CD14-positive monocyte (primary cell): ENCODE measurements at regions of chr3 and their contacts with region 1.

Region 1: GRCh38 chr3:8970971-8971589 is 7.8 kb upstream of the RAD18 start:
- DNase-seq: peak; percentile 48 to 62 (median 50)
- H3K4me3 ChIP-seq: no peak overlapping the region
- H3K4me3 Mint-ChIP-seq: no peak overlapping the region
- H3K27ac ChIP-seq: no peak overlapping the region
- H3K27ac Mint-ChIP-seq: peak overlapping the region in 1 of 7 donors; percentile 66
- H3K4me1 ChIP-seq: no peaks in the 10 kb centered on the region
- H3K4me1 Mint-ChIP-seq: peaks cover 3% of the 10 kb centered on the region
- H3K27me3 ChIP-seq: no peaks in the 10 kb centered on the region
- H3K27me3 Mint-ChIP-seq: peaks cover 7 to 16% (median 10%) of the 10 kb centered on the region in 3 donors
- CTCF ChIP-seq: peak; percentile 94

Region 2: GRCh38 chr3:9036404-9037131 is 65.5 kb after region 1 on chr3:
- intact Hi-C with region 1: no loop called
- DNase-seq: no peak
- H3K4me3 ChIP-seq: no peak overlapping the region
- H3K4me3 Mint-ChIP-seq: no peak overlapping the region
- H3K27ac ChIP-seq: no peak overlapping the region
- H3K27ac Mint-ChIP-seq: peak overlapping the region in 3 of 7 donors; percentile 13 to 49 (median 21)
- H3K4me1 ChIP-seq: peaks cover 28 to 29% of the 10 kb centered on the region in 2 donors
- H3K4me1 Mint-ChIP-seq: peaks cover 29% of the 10 kb centered on the region
- H3K27me3 ChIP-seq: no peaks in the 10 kb centered on the region
- H3K27me3 Mint-ChIP-seq: peaks cover 0 to 2% (median 1%) of the 10 kb centered on the region in 3 donors
- CTCF ChIP-seq: no peak

Region 3: GRCh38 chr3:9067352-9067975 is 96.4 kb after region 1 on chr3:
- intact Hi-C with region 1: loop called in 1 of 2 experiments (anchors 10 kb)
- DNase-seq: peak in 1 of 3 donors; percentile 15
- H3K4me3 ChIP-seq: no peak overlapping the region
- H3K4me3 Mint-ChIP-seq: no peak overlapping the region
- H3K27ac ChIP-seq: no peak overlapping the region
- H3K27ac Mint-ChIP-seq: no peak overlapping the region
- H3K4me1 ChIP-seq: peaks cover 9 to 12% of the 10 kb centered on the region in 2 donors
- H3K4me1 Mint-ChIP-seq: peaks cover 12% of the 10 kb centered on the region
- H3K27me3 ChIP-seq: no peaks in the 10 kb centered on the region
- H3K27me3 Mint-ChIP-seq: peaks cover 0 to 3% (median 2%) of the 10 kb centered on the region in 3 donors
- CTCF ChIP-seq: peak; percentile 78

Region 4: GRCh38 chr3:9302425-9303181 is 331.5 kb after region 1 on chr3:
- intact Hi-C with region 1: loop called (anchors 1 kb)
- DNase-seq: peak; percentile 59 to 70 (median 59)
- H3K4me3 ChIP-seq: peak overlapping the region in 1 of 3 experiments; percentile 12
- H3K4me3 Mint-ChIP-seq: peak overlapping the region in 1 of 2 donors; percentile 71
- H3K27ac ChIP-seq: no peak overlapping the region
- H3K27ac Mint-ChIP-seq: no peak overlapping the region
- H3K4me1 ChIP-seq: peaks cover 0 to 5% of the 10 kb centered on the region in 2 donors
- H3K4me1 Mint-ChIP-seq: peaks cover 5% of the 10 kb centered on the region
- H3K27me3 ChIP-seq: no peaks in the 10 kb centered on the region
- H3K27me3 Mint-ChIP-seq: peaks cover 4 to 8% (median 5%) of the 10 kb centered on the region in 3 donors
- CTCF ChIP-seq: peak; percentile 94